Cardiac septum (tissue), 1 donor: ENCODE measurements at regions of chr19 and their contacts with region 1.

Region 1: DNA sequence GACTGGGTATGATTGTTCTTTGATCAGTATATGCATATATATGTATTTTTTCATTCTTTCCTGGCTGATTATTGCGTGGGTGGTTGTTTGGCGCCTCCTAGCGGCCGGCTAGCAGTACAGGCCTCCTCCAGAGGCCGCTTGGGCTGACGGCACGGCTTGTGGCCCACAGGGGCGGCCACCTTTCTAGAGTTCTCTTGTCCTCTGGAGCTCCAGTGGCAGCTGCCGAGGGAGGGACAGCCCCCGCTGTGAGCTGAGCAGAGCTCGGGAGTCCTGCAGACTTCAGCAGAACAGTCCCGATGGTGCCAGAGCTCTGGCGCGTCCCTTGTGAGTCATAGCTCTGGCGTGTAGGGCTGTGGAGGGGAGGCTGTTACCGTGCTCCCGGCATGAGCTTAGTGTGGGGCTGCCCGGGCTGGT is 22.5 kb upstream of the ZNF429 start:
- DNase-seq: peak; percentile 82

Region 2: GRCh38 chr19:21202865-21203494 is 279.9 kb before region 1 on chr19:
- intact Hi-C with region 1: loop called (anchors 5 kb)
- DNase-seq: no peak

Region 3: GRCh38 chr19:21402303-21402985 is 80.4 kb before region 1 on chr19:
- intact Hi-C with region 1: no loop called
- DNase-seq: no peak

Region 4: DNA sequence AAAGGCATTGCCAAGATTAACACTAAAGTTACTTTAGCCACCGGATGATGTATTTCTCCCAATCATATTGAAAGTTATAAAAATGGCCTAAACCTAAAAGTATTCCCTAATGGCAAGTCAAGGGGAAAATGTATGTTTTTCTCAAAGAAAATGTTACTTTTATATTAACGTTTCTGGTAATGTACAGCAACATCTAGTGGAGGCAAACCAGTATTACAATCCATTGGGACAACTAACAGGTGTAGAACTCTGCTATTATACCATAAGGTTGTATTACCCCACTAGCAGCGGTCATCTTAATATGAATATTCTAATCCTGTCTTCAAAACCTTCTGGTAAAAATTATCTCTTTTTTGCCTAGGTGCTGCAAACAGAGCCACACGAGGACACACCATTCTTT is 215.3 kb after region 1 on chr19:
- intact Hi-C with region 1: loop called (anchors 5 kb)
- DNase-seq: no peak